ENCODE measurements at regions of chr1 and their contacts with region 1.

Region 1: GRCh38 chr1:41268154-41268770 is 26.2 kb upstream of the SCMH1 start:
- DNase-seq: peak; percentile 69
- ATAC-seq: peak; percentile 99
- H3K4me3 ChIP-seq: no peak overlapping the region
- H3K27ac ChIP-seq: no peak overlapping the region
- H3K4me1 ChIP-seq: no peaks in the 10 kb centered on the region
- H3K27me3 ChIP-seq: peaks cover 26% of the 10 kb centered on the region
- CTCF ChIP-seq: peak; percentile 96
- POLR2A ChIP-seq: no peak
- RAD21 ChIP-seq: peak; percentile 95

Region 2: DNA sequence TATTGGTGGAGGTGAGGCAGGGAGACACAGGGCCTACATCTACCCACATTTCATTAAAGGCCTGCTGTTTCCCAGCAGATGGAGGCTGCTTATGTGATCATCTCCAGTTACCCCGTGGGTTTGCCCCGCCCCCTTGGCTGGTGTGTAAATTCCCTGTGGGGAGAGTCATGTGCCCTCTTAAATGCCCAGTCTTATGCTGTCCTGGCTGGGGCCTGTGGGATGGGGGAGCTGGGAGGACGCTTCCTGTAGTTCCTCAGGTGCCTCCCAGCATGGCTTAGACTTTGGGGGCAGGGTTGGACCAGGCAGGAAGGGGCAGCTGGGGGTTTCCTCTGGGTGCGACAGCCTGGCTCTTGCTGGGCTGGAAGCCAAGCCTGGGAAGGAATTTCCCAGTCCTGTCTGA is 390.6 kb before region 1 on chr1:
- CTCF ChIA-PET with region 1: no interaction called
- POLR2A ChIA-PET with region 1: no interaction called
- dilution Hi-C with region 1: no loop called
- in situ Hi-C with region 1: no loop called
- intact Hi-C with region 1: no loop called
- DNase-seq: peak; percentile 91
- ATAC-seq: peak; percentile 78
- H3K4me3 ChIP-seq: no peak overlapping the region
- H3K27ac ChIP-seq: peak overlapping the region; percentile 45
- H3K4me1 ChIP-seq: peaks cover 13% of the 10 kb centered on the region
- H3K27me3 ChIP-seq: no peaks in the 10 kb centered on the region
- CTCF ChIP-seq: no peak
- POLR2A ChIP-seq: no peak
- RAD21 ChIP-seq: no peak

Region 3: GRCh38 chr1:41416552-41417334 is 148.5 kb after region 1 on chr1:
- CTCF ChIA-PET with region 1: no interaction called
- POLR2A ChIA-PET with region 1: no interaction called
- dilution Hi-C with region 1: no loop called
- in situ Hi-C with region 1: loop called (anchors 5 kb)
- intact Hi-C with region 1: loop called (anchors 1 kb)
- DNase-seq: peak; percentile 66
- ATAC-seq: peak; percentile 76
- H3K4me3 ChIP-seq: no peak overlapping the region
- H3K27ac ChIP-seq: no peak overlapping the region
- H3K4me1 ChIP-seq: peaks cover 2% of the 10 kb centered on the region; the same call in 1 of the 2 replicates
- H3K27me3 ChIP-seq: peaks cover 19% of the 10 kb centered on the region
- CTCF ChIP-seq: peak; percentile 90
- POLR2A ChIP-seq: no peak
- RAD21 ChIP-seq: peak; percentile 91

Region 4: GRCh38 chr1:41432481-41433280 is 164.4 kb after region 1 on chr1:
- CTCF ChIA-PET with region 1: no interaction called
- POLR2A ChIA-PET with region 1: no interaction called
- dilution Hi-C with region 1: no loop called
- in situ Hi-C with region 1: no loop called
- intact Hi-C with region 1: loop called (anchors 2 kb)
- DNase-seq: peak; percentile 76
- ATAC-seq: peak; percentile 87
- H3K4me3 ChIP-seq: no peak overlapping the region
- H3K27ac ChIP-seq: no peak overlapping the region
- H3K4me1 ChIP-seq: peaks cover 8% of the 10 kb centered on the region
- H3K27me3 ChIP-seq: peaks cover 33% of the 10 kb centered on the region
- CTCF ChIP-seq: peak; percentile 80
- POLR2A ChIP-seq: no peak
- RAD21 ChIP-seq: peak; percentile 71

Region 5: GRCh38 chr1:41516168-41517061 is 248.2 kb after region 1 on chr1:
- CTCF ChIA-PET with region 1: no interaction called
- POLR2A ChIA-PET with region 1: no interaction called
- dilution Hi-C with region 1: no loop called
- in situ Hi-C with region 1: no loop called
- intact Hi-C with region 1: loop called (anchors 1 kb)
- DNase-seq: peak; percentile 83
- ATAC-seq: peak; percentile 99
- H3K4me3 ChIP-seq: no peak overlapping the region
- H3K27ac ChIP-seq: no peak overlapping the region
- H3K4me1 ChIP-seq: peaks cover 3% of the 10 kb centered on the region; the same call in 1 of the 2 replicates
- H3K27me3 ChIP-seq: no peaks in the 10 kb centered on the region
- CTCF ChIP-seq: peak; percentile 92
- POLR2A ChIP-seq: no peak
- RAD21 ChIP-seq: peak; percentile 79

Region 6: DNA sequence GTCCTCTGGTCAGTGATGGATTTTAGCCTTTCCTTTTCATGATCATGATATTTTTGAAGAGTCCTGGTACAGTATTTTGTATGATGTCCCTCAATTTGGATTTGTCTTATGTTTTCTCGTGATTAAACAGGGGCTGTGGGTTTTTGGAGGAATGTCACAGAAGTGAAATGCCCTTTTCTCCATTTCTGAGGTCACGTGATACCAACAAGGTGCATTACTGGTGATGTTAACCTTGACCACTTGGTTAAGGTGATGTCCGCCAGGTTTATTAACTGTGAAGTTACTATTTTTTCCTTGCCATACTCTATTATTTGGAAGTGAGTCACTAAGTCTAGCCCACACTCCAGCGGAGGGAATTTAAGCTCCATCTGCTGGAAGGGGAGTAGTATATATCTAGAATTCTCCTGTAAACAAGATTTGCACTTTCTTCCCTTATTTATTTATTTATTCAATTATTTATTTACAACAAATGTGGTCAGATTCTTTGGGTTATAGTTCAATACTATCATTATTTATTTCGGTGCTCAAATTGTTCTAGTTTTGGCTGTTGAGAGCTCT is 527.0 kb after region 1 on chr1:
- CTCF ChIA-PET with region 1: no interaction called
- POLR2A ChIA-PET with region 1: no interaction called
- dilution Hi-C with region 1: no loop called
- in situ Hi-C with region 1: no loop called
- intact Hi-C with region 1: loop called (anchors 5 kb)
- DNase-seq: peak; percentile 73
- ATAC-seq: peak; percentile 88
- H3K4me3 ChIP-seq: no peak overlapping the region
- H3K27ac ChIP-seq: no peak overlapping the region
- H3K4me1 ChIP-seq: no peaks in the 10 kb centered on the region; the same call in 1 of the 2 replicates
- H3K27me3 ChIP-seq: peaks cover 4% of the 10 kb centered on the region; the same call in 1 of the 2 replicates
- CTCF ChIP-seq: peak; percentile 75
- POLR2A ChIP-seq: no peak
- RAD21 ChIP-seq: peak; percentile 85

Measured in IMR-90 (cell line).